Prostate gland (tissue), 2 donors: ENCODE measurements at regions of chr12 and their contacts with region 1.

Region 1: DNA sequence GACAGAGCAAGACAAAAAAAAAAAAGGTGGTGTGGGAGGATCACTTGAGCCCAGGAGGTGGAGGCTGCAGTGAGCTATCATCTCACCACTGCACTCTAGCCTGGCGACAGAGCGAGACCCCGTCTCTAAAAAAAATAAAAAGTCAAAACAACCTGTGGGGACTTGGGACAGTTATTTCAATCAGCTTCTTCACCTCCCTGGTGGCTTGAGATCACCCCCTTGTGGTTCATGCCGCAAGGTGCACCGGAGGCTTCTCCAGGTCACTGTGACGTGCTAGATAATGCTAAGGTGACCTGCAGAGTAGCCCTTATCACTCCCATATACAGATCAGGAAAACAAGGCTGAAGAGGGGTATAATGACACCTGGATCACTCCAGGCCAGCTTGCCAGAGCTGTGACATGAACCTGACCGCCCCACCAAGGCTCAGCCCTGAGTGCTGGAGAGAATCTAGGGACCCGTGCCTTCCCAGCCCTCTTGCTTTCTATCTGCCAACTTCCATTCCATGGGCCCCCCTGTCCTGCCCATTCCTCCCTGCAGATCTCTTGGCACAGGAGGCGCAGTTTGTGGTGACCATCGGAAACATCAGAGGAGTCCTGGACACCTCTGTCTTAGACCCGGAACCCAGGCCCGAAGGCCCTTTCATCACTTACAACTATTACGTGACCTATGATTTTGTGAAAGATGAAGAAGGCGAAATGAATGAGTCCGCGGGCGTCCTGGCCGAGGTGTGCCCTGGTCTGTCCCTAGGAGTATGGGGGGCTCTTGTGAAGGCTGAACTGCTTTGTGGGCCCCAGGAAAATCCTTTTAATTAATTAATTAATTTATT is 8.1 kb downstream of the LRRC43 start:
- DNase-seq: peak; percentile 55
- H3K4me3 ChIP-seq: no peak overlapping the region
- H3K27ac ChIP-seq: no peak overlapping the region
- H3K4me1 ChIP-seq: no peaks in the 10 kb centered on the region
- H3K27me3 ChIP-seq: no peaks in the 10 kb centered on the region
- CTCF ChIP-seq: peak in 3 of 4 experiments; percentile 67 to 85 (median 79)
- POLR2A ChIP-seq: no peak

Region 2: DNA sequence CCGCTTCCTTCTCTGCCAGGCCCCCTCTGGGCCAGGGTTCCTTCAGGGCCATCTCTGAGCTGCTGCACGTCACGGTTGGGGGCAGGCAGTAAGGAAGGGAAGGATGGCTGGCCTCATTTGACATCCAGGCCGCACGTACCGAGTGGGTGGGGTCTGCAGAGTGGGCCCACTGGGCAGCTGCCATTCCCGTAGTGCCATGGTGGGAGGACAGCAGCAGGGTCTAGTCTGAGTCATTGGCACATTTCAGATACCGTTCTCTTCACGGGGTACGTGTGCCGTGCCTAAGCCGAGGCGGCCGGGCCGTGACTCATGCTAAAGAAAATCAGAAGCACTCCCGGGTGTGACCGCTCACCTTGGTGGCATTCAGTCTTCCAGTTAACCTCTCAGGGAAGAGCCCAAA is 60.9 kb before region 1 on chr12:
- intact Hi-C with region 1: loop called (anchors 5 kb)
- DNase-seq: no peak
- H3K4me3 ChIP-seq: no peak overlapping the region
- H3K27ac ChIP-seq: no peak overlapping the region
- H3K4me1 ChIP-seq: no peaks in the 10 kb centered on the region
- H3K27me3 ChIP-seq: no peaks in the 10 kb centered on the region
- CTCF ChIP-seq: no peak
- POLR2A ChIP-seq: no peak